Right cardiac atrium (tissue), 5 donors: ENCODE measurements at regions of chr16 and their contacts with region 1.

Region 1: GRCh38 chr16:48156790-48157209 is 1.0 kb upstream of the ABCC12 start:
- DNase-seq: peak; percentile 81 to 93 (median 93)
- ATAC-seq: peak; percentile 78 to 86
- H3K4me3 ChIP-seq: no peak overlapping the region
- H3K27ac ChIP-seq: no peak overlapping the region
- H3K4me1 ChIP-seq: no peaks in the 10 kb centered on the region
- H3K27me3 ChIP-seq: no peaks in the 10 kb centered on the region

Region 2: GRCh38 chr16:46947900-46948547 is 1208.8 kb before region 1 on chr16:
- intact Hi-C with region 1: loop called in 1 of 4 experiments (anchors 10 kb)
- DNase-seq: no peak
- ATAC-seq: peak in 1 of 2 donors; percentile 38
- H3K4me3 ChIP-seq: no peak overlapping the region
- H3K27ac ChIP-seq: no peak overlapping the region
- H3K4me1 ChIP-seq: no peaks in the 10 kb centered on the region
- H3K27me3 ChIP-seq: no peaks in the 10 kb centered on the region

Region 3: DNA sequence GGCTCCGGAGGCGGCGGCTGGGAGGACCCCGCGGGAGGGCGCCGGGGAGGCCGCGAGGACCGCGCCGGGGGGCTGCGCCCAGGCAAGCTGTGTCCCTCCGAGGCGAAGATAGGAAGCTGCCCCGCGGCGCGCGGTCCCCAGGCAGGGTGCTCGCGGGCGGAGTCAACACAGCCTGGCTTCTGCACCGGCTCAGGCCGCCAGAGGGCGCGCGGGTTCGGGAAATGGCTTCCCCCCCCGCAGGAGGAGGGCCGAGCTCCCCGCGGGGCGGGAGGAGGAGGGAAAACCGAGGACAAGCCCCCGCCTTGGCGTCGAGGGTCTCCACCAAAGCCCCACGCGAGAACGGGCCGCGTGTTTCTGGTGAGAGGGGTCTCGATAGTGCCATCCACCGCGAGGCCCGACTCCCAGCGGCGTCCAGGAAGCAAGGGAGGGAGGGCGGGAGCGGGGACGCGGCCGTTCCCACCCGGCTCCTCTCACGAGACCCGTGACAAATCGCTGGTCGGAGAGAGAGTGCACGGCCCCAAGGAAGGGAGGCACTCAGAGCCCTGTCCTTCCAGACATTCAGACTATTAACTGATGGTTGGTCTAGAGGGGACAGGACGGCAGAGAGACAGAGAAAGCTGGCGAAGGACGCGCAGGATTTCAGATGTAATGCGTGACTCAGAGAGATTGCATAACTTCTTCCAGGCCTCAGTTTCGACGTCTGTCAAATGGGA is 1118.9 kb before region 1 on chr16:
- intact Hi-C with region 1: loop called in 3 of 4 experiments (anchors 10 kb)
- DNase-seq: peak; percentile 90 to 96 (median 96)
- ATAC-seq: peak; percentile 98 to 99
- H3K4me3 ChIP-seq: peak overlapping the region; percentile 88
- H3K27ac ChIP-seq: no peak overlapping the region
- H3K4me1 ChIP-seq: no peaks in the 10 kb centered on the region
- H3K27me3 ChIP-seq: no peaks in the 10 kb centered on the region

Region 4: GRCh38 chr16:47136101-47136820 is 1020.5 kb before region 1 on chr16:
- intact Hi-C with region 1: loop called (anchors 2 to 10 kb)
- DNase-seq: no peak
- ATAC-seq: peak in 1 of 2 donors; percentile 52
- H3K4me3 ChIP-seq: no peak overlapping the region
- H3K27ac ChIP-seq: no peak overlapping the region
- H3K4me1 ChIP-seq: no peaks in the 10 kb centered on the region
- H3K27me3 ChIP-seq: no peaks in the 10 kb centered on the region

Region 5: GRCh38 chr16:49127103-49127502 is 970.3 kb after region 1 on chr16:
- intact Hi-C with region 1: no loop called
- DNase-seq: no peak
- ATAC-seq: no peak
- H3K4me3 ChIP-seq: no peak overlapping the region
- H3K27ac ChIP-seq: no peak overlapping the region
- H3K4me1 ChIP-seq: no peaks in the 10 kb centered on the region
- H3K27me3 ChIP-seq: no peaks in the 10 kb centered on the region